Tibial artery (tissue), 4 donors: ENCODE measurements at regions of chr12 and their contacts with region 1.

Region 1: DNA sequence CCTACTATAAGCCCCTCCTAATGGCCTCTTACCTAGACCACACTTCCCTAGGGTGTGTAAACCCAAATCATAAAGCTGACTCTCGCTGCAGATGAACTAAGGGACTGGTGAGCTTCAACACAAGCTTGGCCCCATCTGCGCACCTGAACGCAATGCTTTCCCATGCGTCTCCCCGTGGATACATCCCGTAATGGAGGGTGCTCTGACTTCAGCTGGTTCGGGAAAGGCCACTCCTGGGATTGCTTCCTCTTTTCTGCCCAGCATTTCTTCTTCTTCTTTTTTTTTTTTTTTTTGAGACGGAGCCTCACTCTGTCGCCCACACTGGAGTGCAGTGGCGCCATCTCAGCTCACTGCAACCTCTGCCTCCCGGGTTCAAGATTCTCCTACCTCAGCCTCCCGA is 27.7 kb upstream of the ETFBKMT start:
- DNase-seq: no peak
- H3K4me3 ChIP-seq: no peak overlapping the region
- H3K27ac ChIP-seq: no peak overlapping the region
- H3K4me1 ChIP-seq: peaks cover 0 to 15% (median 7%) of the 10 kb centered on the region in 4 donors
- H3K27me3 ChIP-seq: no peaks in the 10 kb centered on the region
- CTCF ChIP-seq: no peak

Region 2: GRCh38 chr12:31405021-31405420 is 226.8 kb before region 1 on chr12:
- intact Hi-C with region 1: loop called (anchors 2 kb)
- DNase-seq: no peak
- H3K4me3 ChIP-seq: no peak overlapping the region
- H3K27ac ChIP-seq: no peak overlapping the region
- H3K4me1 ChIP-seq: peaks cover 0 to 8% (median 0%) of the 10 kb centered on the region in 4 donors
- H3K27me3 ChIP-seq: no peaks in the 10 kb centered on the region
- CTCF ChIP-seq: no peak

Region 3: GRCh38 chr12:31570880-31571279 is 60.9 kb before region 1 on chr12:
- intact Hi-C with region 1: no loop called
- DNase-seq: no peak
- H3K4me3 ChIP-seq: no peak overlapping the region
- H3K27ac ChIP-seq: no peak overlapping the region
- H3K4me1 ChIP-seq: peaks cover 0 to 32% (median 5%) of the 10 kb centered on the region in 4 donors
- H3K27me3 ChIP-seq: no peaks in the 10 kb centered on the region
- CTCF ChIP-seq: no peak

Region 4: DNA sequence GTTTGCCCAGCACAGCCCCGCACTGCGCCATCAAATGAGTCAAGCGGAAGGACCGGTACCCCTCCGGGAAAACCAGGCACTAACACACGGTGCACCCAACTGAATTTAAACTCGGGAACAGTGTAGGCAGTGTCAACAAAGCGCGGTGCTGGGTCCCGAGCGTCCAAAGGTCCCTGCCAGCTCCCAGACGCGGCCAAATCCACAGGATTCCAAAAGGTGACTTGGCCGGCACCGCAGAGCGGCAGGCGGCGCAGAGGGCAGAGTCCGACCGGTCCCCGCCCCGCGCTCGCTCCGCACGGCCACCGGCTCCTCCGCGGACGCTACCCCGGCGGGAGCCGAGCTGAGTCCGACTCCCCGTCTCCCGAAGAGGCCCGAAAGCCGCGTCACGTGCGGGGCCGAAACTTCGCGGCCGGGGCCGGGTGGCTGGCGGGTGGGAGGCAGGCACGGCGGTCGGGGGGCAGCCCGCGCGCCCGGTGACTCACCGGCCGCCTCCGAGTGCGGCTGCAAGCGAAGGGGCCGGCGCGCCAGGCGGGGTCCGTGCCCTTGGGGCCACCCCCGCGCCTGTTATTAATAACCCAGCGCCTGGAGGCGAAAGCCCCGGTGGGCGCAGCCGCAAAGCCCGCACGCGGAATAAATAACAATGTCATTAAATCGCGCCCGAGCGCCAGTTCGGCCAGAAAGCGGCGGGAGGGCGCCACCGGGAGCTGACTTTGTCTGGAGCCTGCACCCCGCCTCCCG is 41.7 kb before region 1 on chr12:
- intact Hi-C with region 1: no loop called
- DNase-seq: peak; percentile 69 to 86
- H3K4me3 ChIP-seq: peak overlapping the region; percentile 75 to 98
- H3K27ac ChIP-seq: peak overlapping the region; percentile 94 to 99
- H3K4me1 ChIP-seq: peaks cover 0 to 27% (median 13%) of the 10 kb centered on the region in 4 donors
- H3K27me3 ChIP-seq: no peaks in the 10 kb centered on the region
- CTCF ChIP-seq: no peak

Region 5: DNA sequence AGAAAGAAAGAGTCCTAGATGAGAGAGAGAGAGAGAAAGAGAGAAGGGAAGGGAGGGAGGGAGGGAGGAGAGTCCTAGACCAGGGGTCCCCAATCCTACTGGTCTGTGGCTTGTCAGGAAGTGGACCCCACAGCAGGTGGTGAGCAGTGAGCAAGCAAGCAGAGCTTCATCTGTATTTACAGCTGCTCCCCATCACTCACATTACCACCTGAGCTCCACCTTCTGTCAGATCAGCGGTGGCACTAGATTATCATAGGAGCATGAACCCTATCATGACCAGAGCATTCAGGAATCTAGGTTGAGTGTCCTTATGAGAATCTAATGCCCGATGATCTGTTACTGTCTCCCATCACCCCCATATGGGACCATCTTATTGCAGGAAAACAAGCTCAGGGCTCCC is 136.3 kb after region 1 on chr12:
- intact Hi-C with region 1: no loop called
- DNase-seq: no peak
- H3K4me3 ChIP-seq: no peak overlapping the region
- H3K27ac ChIP-seq: no peak overlapping the region
- H3K4me1 ChIP-seq: no peaks in the 10 kb centered on the region
- H3K27me3 ChIP-seq: no peaks in the 10 kb centered on the region
- CTCF ChIP-seq: no peak

Region 6: GRCh38 chr12:31832740-31833729 is 201.3 kb after region 1 on chr12:
- intact Hi-C with region 1: no loop called
- DNase-seq: no peak
- H3K4me3 ChIP-seq: no peak overlapping the region
- H3K27ac ChIP-seq: no peak overlapping the region
- H3K4me1 ChIP-seq: no peaks in the 10 kb centered on the region
- H3K27me3 ChIP-seq: no peaks in the 10 kb centered on the region
- CTCF ChIP-seq: no peak